ENCODE measurements at regions of chr5 and their contacts with region 1.

Region 1: DNA sequence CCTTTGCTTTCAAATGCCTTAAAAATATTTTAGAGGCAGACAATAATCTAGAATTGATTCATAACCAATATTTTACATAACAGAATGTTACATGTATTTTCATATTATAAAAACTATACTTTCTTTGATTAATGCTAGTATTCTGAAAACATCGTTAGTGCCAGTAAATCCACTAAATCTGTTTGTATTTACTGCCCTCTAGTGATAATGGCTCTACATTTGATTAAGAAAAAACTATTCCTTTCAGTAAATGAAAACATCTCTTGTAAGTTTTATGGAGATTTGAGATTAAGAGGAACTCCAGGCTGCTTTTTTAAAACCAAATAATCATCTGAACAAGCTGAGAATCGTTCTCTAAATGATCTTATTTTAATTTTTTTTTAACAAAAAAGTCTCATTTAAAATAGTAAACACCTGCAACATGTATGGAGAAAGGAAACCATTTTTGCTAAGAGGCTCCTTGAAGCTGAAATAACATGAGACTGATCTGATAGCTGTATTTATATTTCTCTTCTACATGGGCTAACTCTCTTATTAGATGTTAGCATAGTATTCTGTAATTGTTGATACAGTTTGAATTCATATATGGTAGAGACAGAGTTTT is 424.7 kb downstream of the RAB3C start:
- DNase-seq: no peak
- H3K4me3 Mint-ChIP-seq: no peak overlapping the region
- H3K27ac Mint-ChIP-seq: no peak overlapping the region
- H3K4me1 Mint-ChIP-seq: peaks cover 57% of the 10 kb centered on the region
- H3K27me3 Mint-ChIP-seq: no peaks in the 10 kb centered on the region

Region 2: GRCh38 chr5:58871648-58872242 is 135.8 kb before region 1 on chr5:
- CTCF ChIA-PET with region 1: interaction called, 7 read pairs
- POLR2A ChIA-PET with region 1: no interaction called
- intact Hi-C with region 1: loop called (anchors 1 kb)
- DNase-seq: no peak
- H3K4me3 Mint-ChIP-seq: no peak overlapping the region
- H3K27ac Mint-ChIP-seq: no peak overlapping the region
- H3K4me1 Mint-ChIP-seq: no peaks in the 10 kb centered on the region
- H3K27me3 Mint-ChIP-seq: peaks cover 12% of the 10 kb centered on the region

Region 3: DNA sequence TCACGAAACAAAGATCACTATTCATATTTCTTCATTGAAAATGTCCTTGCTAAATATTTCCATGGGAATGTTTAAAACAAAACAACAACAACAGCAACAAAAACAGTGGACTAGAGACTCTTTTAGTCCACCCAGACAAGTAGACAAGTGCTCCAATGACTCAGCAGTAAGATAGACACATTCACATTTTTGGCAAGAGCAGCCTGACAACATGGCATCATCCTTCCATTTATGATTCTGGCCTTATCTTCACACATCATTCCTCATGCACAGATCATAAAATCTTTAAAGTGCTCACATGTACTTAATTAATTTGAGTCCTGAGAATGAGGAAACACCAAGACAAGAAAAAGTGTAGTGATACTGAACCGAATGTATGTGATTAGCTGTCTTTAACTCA is 1018.6 kb after region 1 on chr5:
- CTCF ChIA-PET with region 1: no interaction called
- POLR2A ChIA-PET with region 1: no interaction called
- intact Hi-C with region 1: no loop called
- DNase-seq: no peak
- H3K4me3 Mint-ChIP-seq: no peak overlapping the region
- H3K27ac Mint-ChIP-seq: no peak overlapping the region
- H3K4me1 Mint-ChIP-seq: no peaks in the 10 kb centered on the region
- H3K27me3 Mint-ChIP-seq: no peaks in the 10 kb centered on the region

Measured in activated CD4-positive, alpha-beta memory T cell treated with anti-CD3 and anti-CD28 coated beads for 36 hours (primary cell).